Vagina (tissue), 2 donors: ENCODE measurements at regions of chr18 and their contacts with region 1.

Region 1: DNA sequence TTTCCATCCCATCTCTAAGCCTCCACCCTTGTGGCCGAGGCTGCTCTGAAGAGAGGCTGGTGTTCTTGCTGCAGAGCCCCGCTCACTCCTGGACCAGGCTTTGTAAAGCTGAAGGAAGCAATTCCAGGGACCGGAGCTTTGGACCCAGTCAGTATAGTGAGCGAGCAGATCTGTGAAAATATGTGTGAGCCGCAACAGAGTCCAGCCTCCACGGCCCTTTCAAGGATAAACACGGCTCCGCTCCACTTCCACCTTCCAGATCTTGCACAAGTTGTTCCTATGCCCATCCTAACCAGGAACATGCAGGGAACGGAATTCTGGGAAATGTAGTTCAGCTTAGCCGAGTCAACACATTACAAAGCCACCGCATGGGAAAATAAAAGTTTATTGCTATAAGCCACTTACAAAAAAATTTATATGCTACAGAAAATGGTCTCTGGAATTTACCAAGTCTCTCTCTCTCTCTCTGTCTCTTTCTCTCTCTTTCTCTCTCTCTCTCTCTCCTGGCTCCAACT is 151.7 kb upstream of the ZNF521 start:
- DNase-seq: no peak
- H3K4me3 ChIP-seq: peak overlapping the region; percentile 41 to 50
- H3K27ac ChIP-seq: peak overlapping the region; percentile 58
- H3K4me1 ChIP-seq: no peaks in the 10 kb centered on the region
- H3K27me3 ChIP-seq: no peaks in the 10 kb centered on the region
- CTCF ChIP-seq: no peak
- POLR2A ChIP-seq: no peak

Region 2: GRCh38 chr18:25351777-25352628 is 151.6 kb before region 1 on chr18 and contains the start of gene ZNF521:
- intact Hi-C with region 1: loop called (anchors 5 kb)
- DNase-seq: peak in 1 of 2 donors; percentile 94
- H3K4me3 ChIP-seq: peak within 1 kb of the TSS; percentile 60 to 65
- H3K27ac ChIP-seq: peak within 1 kb of the TSS; percentile 93
- H3K4me1 ChIP-seq: peaks cover 12% of the 10 kb centered on the region
- H3K27me3 ChIP-seq: no peaks in the 10 kb centered on the region
- CTCF ChIP-seq: no peak
- POLR2A ChIP-seq: peak in 1 of 2 donors; percentile 61
- total RNA-seq, gene ZNF521: 18.7 TPM